CD4-positive, alpha-beta memory T cell (primary cell): ENCODE measurements at regions of chr5 and their contacts with region 1.

Region 1: DNA sequence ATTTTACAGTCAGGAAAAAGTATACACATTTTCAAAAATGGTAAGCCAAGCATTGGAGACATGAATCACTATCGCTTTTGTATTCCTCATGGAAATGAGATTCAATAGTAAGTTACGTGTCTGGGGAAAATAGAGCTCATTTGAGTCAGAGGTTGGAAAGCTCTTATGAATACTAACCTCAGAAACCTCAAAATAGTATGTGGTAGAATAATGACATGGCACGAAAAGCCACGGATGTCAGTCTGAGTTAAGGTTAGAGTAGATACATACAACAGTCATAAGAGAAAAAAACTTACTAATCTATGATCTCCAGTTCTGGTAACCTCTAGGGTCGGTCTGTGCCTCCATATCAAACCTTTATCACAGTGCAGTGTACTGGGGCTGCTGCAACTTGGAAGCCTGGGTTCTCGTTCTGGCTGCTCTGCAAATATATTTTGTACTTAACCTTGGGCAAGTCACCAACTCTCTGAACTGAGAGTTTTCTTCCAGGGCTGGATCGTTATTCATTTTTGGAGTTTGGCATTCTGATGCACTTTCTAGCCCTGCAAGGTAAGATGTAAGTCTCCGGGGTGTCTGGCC is 31.8 kb downstream of the MAP1B start:
- DNase-seq: no peak
- H3K4me3 ChIP-seq: no peak overlapping the region
- H3K4me3 Mint-ChIP-seq: no peak overlapping the region
- H3K27ac ChIP-seq: no peak overlapping the region
- H3K27ac Mint-ChIP-seq: no peak overlapping the region
- H3K4me1 ChIP-seq: no peaks in the 10 kb centered on the region
- H3K4me1 Mint-ChIP-seq: peaks cover 0 to 4% (median under 1%) of the 10 kb centered on the region in 4 donors
- H3K27me3 ChIP-seq: no peaks in the 10 kb centered on the region
- H3K27me3 Mint-ChIP-seq: peaks cover 12 to 19% of the 10 kb centered on the region in 2 donors

Region 2: GRCh38 chr5:72063219-72063819 is 75.7 kb before region 1 on chr5:
- CTCF ChIA-PET with region 1: no interaction called
- POLR2A ChIA-PET with region 1: no interaction called
- intact Hi-C with region 1: no loop called
- DNase-seq: no peak
- H3K4me3 ChIP-seq: no peak overlapping the region
- H3K4me3 Mint-ChIP-seq: no peak overlapping the region
- H3K27ac ChIP-seq: no peak overlapping the region
- H3K27ac Mint-ChIP-seq: no peak overlapping the region
- H3K4me1 ChIP-seq: no peaks in the 10 kb centered on the region
- H3K4me1 Mint-ChIP-seq: no peaks in the 10 kb centered on the region
- H3K27me3 ChIP-seq: no peaks in the 10 kb centered on the region
- H3K27me3 Mint-ChIP-seq: peaks cover 8 to 13% of the 10 kb centered on the region in 2 donors

Region 3: GRCh38 chr5:72234265-72234700 is 95.3 kb after region 1 on chr5:
- CTCF ChIA-PET with region 1: no interaction called
- POLR2A ChIA-PET with region 1: no interaction called
- intact Hi-C with region 1: loop called (anchors 5 kb)
- DNase-seq: peak; percentile 64 to 71 (median 67)
- H3K4me3 ChIP-seq: no peak overlapping the region
- H3K4me3 Mint-ChIP-seq: peak overlapping the region in 5 of 8 donors; percentile 13 to 70 (median 41)
- H3K27ac ChIP-seq: no peak overlapping the region
- H3K27ac Mint-ChIP-seq: peak overlapping the region in 3 of 7 donors; percentile 6 to 62 (median 20)
- H3K4me1 ChIP-seq: peaks cover 45% of the 10 kb centered on the region
- H3K4me1 Mint-ChIP-seq: peaks cover 31 to 47% (median 39%) of the 10 kb centered on the region in 4 donors
- H3K27me3 ChIP-seq: no peaks in the 10 kb centered on the region
- H3K27me3 Mint-ChIP-seq: no peaks in the 10 kb centered on the region

Region 4: DNA sequence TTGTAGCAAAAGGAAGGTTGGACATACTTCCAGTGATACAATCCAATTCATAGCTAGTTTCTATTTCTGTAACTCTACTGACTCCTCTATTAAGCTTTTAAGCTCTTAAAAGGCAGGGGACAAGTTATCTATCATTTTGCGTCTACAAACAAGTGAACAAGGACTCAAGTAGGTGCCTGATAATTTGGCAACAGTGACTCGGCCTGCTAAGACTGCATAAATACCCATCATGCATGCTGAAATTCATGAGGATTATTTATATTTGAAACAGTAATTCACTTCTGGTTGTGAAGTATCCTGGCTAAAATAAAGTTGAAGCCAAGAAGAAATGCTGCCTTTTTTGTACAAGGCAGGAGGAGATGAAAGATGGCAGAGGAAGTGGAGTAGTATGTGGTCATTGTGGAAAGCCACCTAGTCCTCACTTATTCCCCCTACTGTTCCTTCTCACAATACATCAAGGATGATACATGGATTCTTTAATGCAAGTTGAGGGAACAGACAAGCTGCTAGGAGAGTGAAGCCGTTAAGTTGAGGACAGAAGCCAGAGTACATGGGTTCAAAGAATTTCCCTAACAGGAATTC is 107.0 kb after region 1 on chr5:
- CTCF ChIA-PET with region 1: no interaction called
- POLR2A ChIA-PET with region 1: no interaction called
- intact Hi-C with region 1: loop called (anchors 1 kb)
- DNase-seq: no peak
- H3K4me3 ChIP-seq: no peak overlapping the region
- H3K4me3 Mint-ChIP-seq: no peak overlapping the region
- H3K27ac ChIP-seq: no peak overlapping the region
- H3K27ac Mint-ChIP-seq: peak overlapping the region in 1 of 7 donors; percentile 37
- H3K4me1 ChIP-seq: no peaks in the 10 kb centered on the region
- H3K4me1 Mint-ChIP-seq: peaks cover 6 to 16% (median 15%) of the 10 kb centered on the region in 4 donors
- H3K27me3 ChIP-seq: no peaks in the 10 kb centered on the region
- H3K27me3 Mint-ChIP-seq: no peaks in the 10 kb centered on the region

Region 5: GRCh38 chr5:72268753-72269410 is 129.8 kb after region 1 on chr5:
- CTCF ChIA-PET with region 1: interaction called, 4 read pairs
- POLR2A ChIA-PET with region 1: no interaction called
- intact Hi-C with region 1: loop called (anchors 1 kb)
- DNase-seq: peak; percentile 20 to 41 (median 39)
- H3K4me3 ChIP-seq: no peak overlapping the region
- H3K4me3 Mint-ChIP-seq: no peak overlapping the region
- H3K27ac ChIP-seq: no peak overlapping the region
- H3K27ac Mint-ChIP-seq: peak overlapping the region in 1 of 7 donors; percentile 3
- H3K4me1 ChIP-seq: no peaks in the 10 kb centered on the region
- H3K4me1 Mint-ChIP-seq: peaks cover 5 to 8% (median 6%) of the 10 kb centered on the region in 4 donors
- H3K27me3 ChIP-seq: no peaks in the 10 kb centered on the region
- H3K27me3 Mint-ChIP-seq: no peaks in the 10 kb centered on the region